H1 (cell line): ENCODE measurements at regions of chr7 and their contacts with region 1.

Region 1: GRCh38 chr7:113774182-113774807 is 144.5 kb downstream of the PPP1R3A start:
- DNase-seq: no peak
- H3K4me3 ChIP-seq: no peak overlapping the region
- H3K27ac ChIP-seq: no peak overlapping the region
- H3K4me1 ChIP-seq: no peaks in the 10 kb centered on the region
- H3K27me3 ChIP-seq: no peaks in the 10 kb centered on the region
- CTCF ChIP-seq: peak in 2 of 3 experiments; percentile 34 to 56; a peak in 2 of 4 replicates
- EP300 ChIP-seq: no peak
- POLR2A ChIP-seq: no peak
- RAD21 ChIP-seq: peak; percentile 68 to 70

Region 2: DNA sequence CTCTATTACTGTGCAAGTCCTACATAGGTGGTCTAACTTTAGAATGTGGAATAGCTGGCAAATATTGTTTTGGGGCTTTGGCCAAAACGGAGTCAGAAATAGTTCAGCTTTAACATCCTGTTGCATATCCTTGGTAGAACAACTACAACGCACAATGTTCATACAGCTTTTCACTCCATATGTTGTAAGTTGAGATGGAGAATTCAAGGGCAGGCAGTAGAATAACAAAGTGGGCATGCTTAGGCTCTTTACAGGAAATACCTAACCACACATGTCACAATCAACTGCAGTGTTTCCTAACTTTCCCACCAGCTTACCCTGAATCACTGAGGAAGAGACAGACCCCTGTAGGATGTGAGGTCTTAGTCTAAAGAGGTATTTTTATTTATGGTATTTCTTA is 22.3 kb after region 1 on chr7:
- CTCF ChIA-PET with region 1: interaction called, 12 read pairs
- POLR2A ChIA-PET with region 1: no interaction called
- DNase-seq: no peak
- H3K4me3 ChIP-seq: no peak overlapping the region
- H3K27ac ChIP-seq: no peak overlapping the region
- H3K4me1 ChIP-seq: no peaks in the 10 kb centered on the region
- H3K27me3 ChIP-seq: no peaks in the 10 kb centered on the region
- CTCF ChIP-seq: no peak
- EP300 ChIP-seq: no peak
- POLR2A ChIP-seq: no peak
- RAD21 ChIP-seq: no peak